GM12878 (cell line): ENCODE measurements at regions of chr6 and their contacts with region 1.

Region 1: GRCh38 chr6:144482142-144482541 is 197.0 kb downstream of the UTRN start:
- DNase-seq: peak; percentile 20
- ATAC-seq: peak; percentile 92
- H3K4me3 ChIP-seq: no peak overlapping the region
- H3K27ac ChIP-seq: no peak overlapping the region
- H3K4me1 ChIP-seq: no peaks in the 10 kb centered on the region
- H3K27me3 ChIP-seq: no peaks in the 10 kb centered on the region
- CTCF ChIP-seq: peak; percentile 63 to 79 (median 73); a peak in 5 of 6 replicates
- EP300 ChIP-seq: no peak
- POLR2A ChIP-seq: no peak
- RAD21 ChIP-seq: peak; percentile 73

Region 2: DNA sequence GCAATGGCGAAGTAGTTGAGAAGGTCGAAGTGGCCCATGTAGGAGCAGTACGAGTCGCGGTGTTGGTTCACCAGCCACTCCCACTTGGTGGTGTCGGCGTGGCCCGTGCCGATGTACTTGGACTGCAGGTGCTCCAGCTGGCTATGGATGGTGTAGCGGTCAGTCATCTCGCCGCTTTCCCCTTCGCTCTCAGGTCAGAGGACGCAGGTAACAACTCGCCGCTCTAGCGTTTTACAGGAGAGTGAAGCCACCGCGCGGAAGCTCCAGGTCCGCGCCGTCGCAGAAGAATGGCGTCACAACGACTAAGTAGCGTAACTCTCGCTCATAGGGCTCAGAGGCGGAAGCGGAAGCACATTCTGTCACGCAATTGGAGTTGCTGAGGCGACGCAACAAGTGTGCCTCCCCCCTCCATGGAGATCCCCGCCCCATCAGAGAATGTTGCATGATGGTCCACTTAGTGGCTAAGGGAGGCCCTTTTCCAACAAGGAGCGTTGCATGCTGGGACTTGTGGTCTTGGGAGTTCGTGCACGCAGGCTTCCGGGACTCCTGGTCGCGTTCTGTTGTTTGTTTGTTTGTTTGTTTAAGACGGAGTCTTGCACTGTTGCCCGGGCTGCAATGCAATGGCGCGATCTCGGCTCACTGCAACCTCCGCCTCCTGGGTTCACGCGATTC is 386.7 kb before region 1 on chr6 and contains the start of gene SF3B5:
- CTCF ChIA-PET with region 1: interaction called, 4 read pairs
- POLR2A ChIA-PET with region 1: no interaction called
- RAD21 ChIA-PET with region 1: no interaction called
- SMC1A ChIA-PET with region 1: interaction called, 4 read pairs
- in situ Hi-C with region 1: loop called (anchors 5 kb)
- intact Hi-C with region 1: no loop called
- DNase-seq: peak; percentile 99
- ATAC-seq: peak; percentile 96
- H3K4me3 ChIP-seq: peak within 1 kb of the TSS; percentile 92
- H3K27ac ChIP-seq: peak within 1 kb of the TSS; percentile 81
- H3K4me1 ChIP-seq: peaks cover 15% of the 10 kb centered on the region
- H3K27me3 ChIP-seq: no peaks in the 10 kb centered on the region
- CTCF ChIP-seq: no peak
- EP300 ChIP-seq: no peak
- POLR2A ChIP-seq: peak; percentile 99
- RAD21 ChIP-seq: no peak
- polyA plus RNA-seq, gene SF3B5: 700 to 864 TPM

Region 3: GRCh38 chr6:144265390-144265789 is 216.8 kb before region 1 on chr6:
- CTCF ChIA-PET with region 1: interaction called, 6 read pairs
- POLR2A ChIA-PET with region 1: no interaction called
- RAD21 ChIA-PET with region 1: interaction called, 6 read pairs
- SMC1A ChIA-PET with region 1: interaction called, 5 read pairs
- in situ Hi-C with region 1: no loop called
- intact Hi-C with region 1: loop called (anchors 10 kb)
- DNase-seq: peak; percentile 28
- ATAC-seq: peak; percentile 98
- H3K4me3 ChIP-seq: no peak overlapping the region
- H3K27ac ChIP-seq: no peak overlapping the region
- H3K4me1 ChIP-seq: no peaks in the 10 kb centered on the region
- H3K27me3 ChIP-seq: no peaks in the 10 kb centered on the region
- CTCF ChIP-seq: no peak
- EP300 ChIP-seq: no peak
- POLR2A ChIP-seq: no peak
- RAD21 ChIP-seq: no peak

Region 4: DNA sequence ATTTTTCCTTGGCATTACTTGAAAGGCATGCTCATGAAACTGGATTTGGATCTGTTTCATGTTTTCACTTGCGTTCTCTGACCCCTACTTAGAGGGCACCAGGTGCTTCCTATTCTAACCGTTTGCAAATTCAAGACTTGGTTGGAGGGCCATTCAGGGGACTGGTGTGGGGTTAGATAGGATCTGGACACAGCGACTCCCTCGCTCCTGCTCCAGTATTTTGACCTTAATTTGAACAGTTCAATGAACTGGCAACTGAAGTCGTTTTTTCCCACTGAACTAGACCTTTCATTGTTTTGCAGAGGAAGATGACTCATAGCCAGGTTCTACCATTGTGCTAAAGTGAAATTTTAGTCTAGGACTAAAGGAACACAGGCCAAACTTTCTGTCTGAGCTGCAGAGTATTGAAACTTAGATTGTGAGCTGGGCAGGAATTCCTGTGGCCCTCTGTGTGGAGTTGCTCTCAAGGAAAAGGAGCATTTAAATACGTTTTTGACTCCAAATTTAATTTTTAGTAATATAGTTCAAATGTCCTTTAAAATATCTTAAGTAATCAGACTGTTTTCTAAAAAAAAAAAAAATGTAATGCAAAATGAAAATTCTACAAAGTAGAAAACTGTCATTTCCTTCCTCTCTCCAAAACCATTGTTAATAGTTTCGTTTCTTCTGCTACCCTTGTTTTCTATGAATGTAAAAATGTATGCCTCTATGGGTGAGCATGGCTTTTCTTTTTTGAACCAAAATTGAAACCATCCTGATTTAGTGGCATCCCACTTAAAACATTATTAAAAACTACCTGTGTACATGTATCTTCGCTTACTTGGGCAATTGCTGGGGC is 132.2 kb before region 1 on chr6:
- CTCF ChIA-PET with region 1: interaction called, 10 read pairs
- POLR2A ChIA-PET with region 1: interaction called, 5 read pairs
- RAD21 ChIA-PET with region 1: no interaction called
- SMC1A ChIA-PET with region 1: interaction called, 4 read pairs
- in situ Hi-C with region 1: no loop called
- intact Hi-C with region 1: loop called (anchors 5 kb)
- DNase-seq: peak; percentile 60
- ATAC-seq: peak; percentile 44
- H3K4me3 ChIP-seq: peak overlapping the region; percentile 60
- H3K27ac ChIP-seq: peak overlapping the region; percentile 88
- H3K4me1 ChIP-seq: peaks cover 55% of the 10 kb centered on the region
- H3K27me3 ChIP-seq: no peaks in the 10 kb centered on the region
- CTCF ChIP-seq: no peak
- EP300 ChIP-seq: peak in 1 of 2 experiments; percentile 25; a peak in 1 of 4 replicates
- POLR2A ChIP-seq: no peak; the same call in 1 of the 2 replicates
- RAD21 ChIP-seq: no peak

Region 5: GRCh38 chr6:144469144-144469575 is 13.0 kb before region 1 on chr6:
- CTCF ChIA-PET with region 1: interaction called, 8 read pairs
- POLR2A ChIA-PET with region 1: no interaction called
- RAD21 ChIA-PET with region 1: interaction called, 3 read pairs
- SMC1A ChIA-PET with region 1: interaction called, 15 read pairs
- in situ Hi-C with region 1: no loop called
- intact Hi-C with region 1: no loop called
- DNase-seq: peak; percentile 15
- ATAC-seq: peak; percentile 93
- H3K4me3 ChIP-seq: no peak overlapping the region
- H3K27ac ChIP-seq: no peak overlapping the region
- H3K4me1 ChIP-seq: peaks cover 7% of the 10 kb centered on the region
- H3K27me3 ChIP-seq: no peaks in the 10 kb centered on the region
- CTCF ChIP-seq: no peak
- EP300 ChIP-seq: no peak
- POLR2A ChIP-seq: no peak
- RAD21 ChIP-seq: no peak